PC-3 (cell line): ENCODE measurements at regions of chr2 and their contacts with region 1.

Region 1: DNA sequence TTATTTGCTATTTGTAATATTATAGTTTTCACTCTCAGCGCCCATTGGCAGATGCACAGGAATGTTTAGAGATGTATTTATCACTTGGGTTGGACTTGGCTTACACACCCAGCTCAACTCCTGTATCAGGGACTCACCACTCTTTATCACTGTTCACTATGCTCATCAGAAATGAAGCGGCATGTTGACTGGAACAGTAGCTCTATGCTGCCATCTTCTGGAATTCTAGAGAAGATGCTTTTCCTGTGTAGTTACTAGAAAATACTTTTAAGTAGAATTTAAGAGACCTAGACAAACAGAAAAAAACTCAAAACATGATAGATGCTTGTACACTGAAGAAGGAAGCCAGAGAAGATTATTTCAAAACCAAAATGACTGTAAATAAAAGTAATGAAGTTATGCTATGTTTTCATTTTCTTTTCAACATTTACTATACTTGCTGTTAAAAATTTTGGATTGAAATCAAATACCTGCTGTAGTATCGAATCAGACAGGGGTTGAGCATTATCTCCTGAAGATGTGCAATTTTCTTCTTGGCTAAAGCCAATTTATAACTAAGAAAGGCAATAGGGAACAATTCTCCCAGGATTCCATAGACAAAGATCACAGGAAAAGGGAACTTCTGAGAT is 47.4 kb upstream of the NXPH2 start:
- DNase-seq: peak; percentile 73
- ATAC-seq: peak; percentile 18; the same call in 1 of the 2 replicates
- H3K4me3 ChIP-seq: no peak overlapping the region
- H3K27ac ChIP-seq: no peak overlapping the region
- H3K4me1 ChIP-seq: peaks cover 33% of the 10 kb centered on the region
- H3K27me3 ChIP-seq: no peaks in the 10 kb centered on the region
- CTCF ChIP-seq: peak; percentile 83

Region 2: GRCh38 chr2:137888845-137889244 is 938.7 kb before region 1 on chr2:
- CTCF ChIA-PET with region 1: interaction called, 5 read pairs
- POLR2A ChIA-PET with region 1: no interaction called
- intact Hi-C with region 1: loop called (anchors 1 kb)
- DNase-seq: peak; percentile 66
- ATAC-seq: no peak
- H3K4me3 ChIP-seq: no peak overlapping the region
- H3K27ac ChIP-seq: no peak overlapping the region
- H3K4me1 ChIP-seq: no peaks in the 10 kb centered on the region
- H3K27me3 ChIP-seq: no peaks in the 10 kb centered on the region
- CTCF ChIP-seq: peak; percentile 78

Region 3: DNA sequence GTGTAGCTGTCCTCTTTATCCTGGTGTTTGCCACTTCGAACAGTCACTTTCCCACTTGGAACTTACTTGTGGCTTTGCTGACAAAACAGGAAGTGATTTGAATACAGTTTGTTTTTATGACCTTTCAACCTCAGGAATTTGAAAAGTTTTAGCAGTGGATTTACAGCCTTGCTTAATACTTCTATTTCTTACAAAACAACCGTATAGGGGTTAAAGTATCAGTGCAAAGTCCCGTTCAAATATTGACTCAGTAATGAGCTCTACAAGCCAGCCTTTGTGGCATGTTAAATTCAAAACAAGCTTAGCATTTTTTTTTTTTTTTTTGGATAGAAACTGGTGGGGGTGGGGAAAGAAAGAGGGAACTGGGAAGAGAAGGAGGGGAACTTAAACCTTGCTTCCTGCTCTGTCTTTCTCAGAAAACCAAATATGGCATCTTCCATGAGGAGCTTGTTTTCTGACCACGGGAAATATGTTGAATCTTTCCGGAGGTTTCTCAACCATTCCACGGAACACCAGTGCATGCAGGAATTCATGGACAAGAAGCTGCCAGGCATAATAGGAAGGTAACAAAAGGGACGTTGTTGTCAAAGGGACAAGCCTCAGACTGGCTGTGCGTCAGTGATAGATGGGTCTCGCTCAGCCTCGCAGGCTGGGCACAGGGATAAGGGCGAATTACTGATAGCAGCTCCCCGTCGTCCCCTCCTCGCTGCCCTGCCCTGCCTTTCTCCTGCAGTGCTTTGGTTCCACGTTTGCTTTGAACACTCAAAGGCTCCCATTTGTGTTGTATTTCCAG is 863.3 kb before region 1 on chr2 and contains the start of gene HNMT:
- CTCF ChIA-PET with region 1: no interaction called
- POLR2A ChIA-PET with region 1: no interaction called
- intact Hi-C with region 1: loop called (anchors 1 kb)
- DNase-seq: peak; percentile 84
- ATAC-seq: peak; percentile 77
- H3K4me3 ChIP-seq: peak within 1 kb of the TSS; percentile 71
- H3K27ac ChIP-seq: peak within 1 kb of the TSS; percentile 75
- H3K4me1 ChIP-seq: peaks cover 42% of the 10 kb centered on the region
- H3K27me3 ChIP-seq: no peaks in the 10 kb centered on the region
- CTCF ChIP-seq: no peak
- total RNA-seq, gene HNMT: 6.9 and 7.1 TPM in 2 replicates

Region 4: DNA sequence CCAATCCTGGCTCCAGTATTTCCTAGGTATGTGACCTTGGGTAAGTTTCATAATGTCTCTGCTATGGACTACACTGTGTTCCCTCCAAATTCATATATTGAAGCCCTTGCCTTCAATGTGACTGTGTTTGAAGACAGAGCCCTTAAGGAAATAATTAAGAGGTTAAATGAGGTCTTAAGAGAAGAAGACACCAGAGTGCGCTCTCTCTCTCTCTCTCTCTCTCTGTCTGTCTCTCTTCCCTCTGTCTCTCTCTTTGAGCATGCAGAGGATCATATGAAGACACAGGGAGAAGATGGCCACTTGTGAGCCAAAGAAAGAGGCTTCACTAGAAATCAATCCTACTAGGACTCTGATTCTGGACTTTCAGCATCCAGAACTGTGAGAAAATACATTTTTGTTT is 99.6 kb before region 1 on chr2:
- CTCF ChIA-PET with region 1: no interaction called
- POLR2A ChIA-PET with region 1: no interaction called
- intact Hi-C with region 1: loop called (anchors 5 kb)
- DNase-seq: peak; percentile 9
- ATAC-seq: no peak
- H3K4me3 ChIP-seq: no peak overlapping the region
- H3K27ac ChIP-seq: no peak overlapping the region
- H3K4me1 ChIP-seq: no peaks in the 10 kb centered on the region
- H3K27me3 ChIP-seq: no peaks in the 10 kb centered on the region
- CTCF ChIP-seq: 0 out of 2 replicates have a peak, but pooled peaks have one; percentile 15

Region 5: DNA sequence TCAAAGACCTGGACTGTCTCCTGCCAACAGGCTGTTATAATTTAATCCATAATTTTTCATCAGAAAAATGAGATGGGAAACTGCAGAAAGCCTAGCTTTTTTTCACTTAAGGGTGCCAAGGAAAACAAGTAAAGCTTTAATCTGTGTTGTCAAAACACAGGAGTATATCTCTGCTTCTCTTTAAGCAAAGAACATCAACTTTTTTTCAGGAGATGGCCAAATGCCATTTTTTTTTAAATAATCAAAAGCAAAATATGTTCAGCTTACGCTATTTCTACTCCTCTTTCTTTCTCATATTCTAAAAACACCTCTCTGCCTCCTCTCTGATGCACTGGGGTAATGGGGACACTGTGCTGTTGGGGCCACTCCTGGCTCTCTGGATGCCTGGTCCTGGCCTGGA is 25.8 kb after region 1 on chr2:
- CTCF ChIA-PET with region 1: no interaction called
- POLR2A ChIA-PET with region 1: no interaction called
- intact Hi-C with region 1: no loop called
- DNase-seq: no peak
- ATAC-seq: no peak
- H3K4me3 ChIP-seq: no peak overlapping the region
- H3K27ac ChIP-seq: no peak overlapping the region
- H3K4me1 ChIP-seq: no peaks in the 10 kb centered on the region
- H3K27me3 ChIP-seq: no peaks in the 10 kb centered on the region
- CTCF ChIP-seq: no peak

Region 6: GRCh38 chr2:139940686-139941085 is 1113.1 kb after region 1 on chr2:
- CTCF ChIA-PET with region 1: no interaction called
- POLR2A ChIA-PET with region 1: no interaction called
- intact Hi-C with region 1: no loop called
- DNase-seq: no peak
- ATAC-seq: no peak
- H3K4me3 ChIP-seq: no peak overlapping the region
- H3K27ac ChIP-seq: no peak overlapping the region
- H3K4me1 ChIP-seq: no peaks in the 10 kb centered on the region
- H3K27me3 ChIP-seq: no peaks in the 10 kb centered on the region
- CTCF ChIP-seq: no peak